Right ventricle myocardium superior (tissue), 1 donor: ENCODE measurements at regions of chr11 and their contacts with region 1.

Region 1: GRCh38 chr11:79119491-79120284 is 321.1 kb downstream of the TENM4 start:
- DNase-seq: no peak
- ATAC-seq: no peak

Region 2: GRCh38 chr11:79182794-79183193 is 63.1 kb after region 1 on chr11:
- intact Hi-C with region 1: loop called (anchors 10 kb)
- DNase-seq: no peak
- ATAC-seq: no peak